SK-N-SH (cell line): ENCODE measurements at regions of chr9 and their contacts with region 1.

Region 1: GRCh38 chr9:135085830-135086546 is 1.5 kb upstream of the OLFM1 start:
- DNase-seq: peak; percentile 92
- H3K4me3 ChIP-seq: peak overlapping the region; percentile 17 to 48; a peak in 3 of 4 replicates
- H3K27ac ChIP-seq: no peak overlapping the region
- H3K4me1 ChIP-seq: peaks cover 0 to 10% of the 10 kb centered on the region in 2 experiments; a peak in 1 of 4 replicates
- H3K27me3 ChIP-seq: no peaks in the 10 kb centered on the region
- CTCF ChIP-seq: peak; percentile 91
- EP300 ChIP-seq: no peak
- RAD21 ChIP-seq: peak; percentile 98

Region 2: GRCh38 chr9:135022191-135022870 is 63.7 kb before region 1 on chr9:
- CTCF ChIA-PET with region 1: no interaction called
- POLR2A ChIA-PET with region 1: no interaction called
- DNase-seq: no peak
- H3K4me3 ChIP-seq: no peak overlapping the region
- H3K27ac ChIP-seq: no peak overlapping the region
- H3K4me1 ChIP-seq: peaks cover 0 to 14% of the 10 kb centered on the region in 2 experiments; a peak in 1 of 4 replicates
- H3K27me3 ChIP-seq: no peaks in the 10 kb centered on the region
- CTCF ChIP-seq: no peak
- EP300 ChIP-seq: no peak
- RAD21 ChIP-seq: no peak

Region 3: GRCh38 chr9:135157856-135158563 is 72.0 kb after region 1 on chr9:
- CTCF ChIA-PET with region 1: interaction called, 21 read pairs
- POLR2A ChIA-PET with region 1: no interaction called
- DNase-seq: no peak
- H3K4me3 ChIP-seq: no peak overlapping the region
- H3K27ac ChIP-seq: no peak overlapping the region
- H3K4me1 ChIP-seq: peaks cover 0 to 26% of the 10 kb centered on the region in 2 experiments; a peak in 1 of 4 replicates
- H3K27me3 ChIP-seq: no peaks in the 10 kb centered on the region
- CTCF ChIP-seq: no peak
- EP300 ChIP-seq: no peak
- RAD21 ChIP-seq: no peak

Region 4: DNA sequence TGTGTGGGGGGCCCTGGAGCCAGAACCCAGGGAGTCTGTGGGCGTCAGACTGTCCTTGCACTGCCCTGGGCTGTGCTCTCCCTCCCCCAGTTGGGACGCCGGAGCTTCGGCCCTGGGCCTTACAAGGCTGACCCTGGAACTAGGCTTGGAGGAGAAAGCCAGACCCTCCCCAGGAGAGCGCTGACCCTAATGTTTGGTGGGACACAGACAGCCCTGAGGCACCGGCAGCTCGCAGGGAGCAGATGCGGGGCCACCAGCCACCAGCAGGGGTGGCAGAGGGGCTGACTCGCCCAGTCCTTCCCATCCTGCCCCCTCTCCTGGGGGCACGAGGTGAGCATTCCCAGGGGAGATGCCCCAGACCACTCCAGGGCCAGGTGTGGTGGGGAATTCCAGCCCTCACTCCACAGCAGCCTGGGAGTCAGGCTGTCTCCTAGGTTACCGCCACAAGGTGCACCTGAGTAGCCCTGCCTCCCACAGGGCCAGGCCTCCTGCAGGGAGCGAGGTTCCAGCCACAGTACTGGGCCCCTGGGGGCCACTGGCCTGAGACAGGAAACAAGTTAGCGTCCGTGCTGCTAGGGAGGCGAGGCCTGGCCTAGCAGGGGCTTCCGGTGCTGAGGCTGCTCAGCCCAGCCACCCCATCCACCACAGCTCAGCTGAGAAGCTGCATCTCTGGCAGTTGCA is 136.1 kb after region 1 on chr9:
- CTCF ChIA-PET with region 1: interaction called, 48 read pairs
- POLR2A ChIA-PET with region 1: no interaction called
- DNase-seq: peak; percentile 68
- H3K4me3 ChIP-seq: no peak overlapping the region
- H3K27ac ChIP-seq: no peak overlapping the region
- H3K4me1 ChIP-seq: peaks cover 0 to 46% of the 10 kb centered on the region in 2 experiments; a peak in 2 of 4 replicates
- H3K27me3 ChIP-seq: no peaks in the 10 kb centered on the region
- CTCF ChIP-seq: no peak
- EP300 ChIP-seq: no peak
- RAD21 ChIP-seq: no peak

Region 5: DNA sequence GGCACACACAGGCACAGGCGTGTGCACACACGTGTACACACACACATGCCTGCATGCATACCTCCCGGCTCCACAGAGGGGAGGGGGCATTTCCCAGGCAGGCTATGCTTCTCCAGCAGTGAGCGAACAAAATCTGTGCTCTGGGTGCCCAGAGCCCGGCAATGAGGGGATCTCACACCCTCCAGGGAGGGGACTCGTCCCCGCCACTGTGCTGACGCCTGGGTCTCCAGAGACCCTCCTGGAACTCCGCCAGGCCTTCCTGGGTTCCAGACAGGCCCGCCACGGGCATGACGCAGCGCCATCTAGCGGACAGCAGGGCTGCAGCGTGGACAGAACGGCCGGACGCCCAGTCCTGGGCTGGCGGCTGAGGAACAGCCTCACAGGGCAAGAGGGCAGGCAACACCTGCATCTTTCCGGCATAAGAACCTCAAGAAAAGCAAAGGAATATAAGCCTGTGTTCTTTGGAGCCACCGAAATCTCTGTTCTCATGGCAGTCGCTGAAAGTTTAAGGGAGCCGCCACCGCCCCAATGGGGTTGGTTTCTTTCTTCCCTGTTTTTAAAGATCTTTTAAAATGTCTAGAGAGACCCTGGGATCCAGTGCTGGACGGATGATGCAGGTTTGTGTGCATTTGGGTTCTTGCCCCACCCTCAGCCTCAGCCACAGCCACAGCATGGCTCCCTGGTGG is 258.0 kb after region 1 on chr9:
- CTCF ChIA-PET with region 1: interaction called, 154 read pairs
- POLR2A ChIA-PET with region 1: no interaction called
- DNase-seq: peak; percentile 93
- H3K4me3 ChIP-seq: peak overlapping the region in 1 of 2 experiments; percentile 53; a peak in 1 of 4 replicates
- H3K27ac ChIP-seq: no peak overlapping the region
- H3K4me1 ChIP-seq: peaks cover 0 to 15% of the 10 kb centered on the region in 2 experiments; a peak in 2 of 4 replicates
- H3K27me3 ChIP-seq: no peaks in the 10 kb centered on the region
- CTCF ChIP-seq: peak; percentile 32
- EP300 ChIP-seq: no peak
- RAD21 ChIP-seq: peak; percentile 90

Region 6: DNA sequence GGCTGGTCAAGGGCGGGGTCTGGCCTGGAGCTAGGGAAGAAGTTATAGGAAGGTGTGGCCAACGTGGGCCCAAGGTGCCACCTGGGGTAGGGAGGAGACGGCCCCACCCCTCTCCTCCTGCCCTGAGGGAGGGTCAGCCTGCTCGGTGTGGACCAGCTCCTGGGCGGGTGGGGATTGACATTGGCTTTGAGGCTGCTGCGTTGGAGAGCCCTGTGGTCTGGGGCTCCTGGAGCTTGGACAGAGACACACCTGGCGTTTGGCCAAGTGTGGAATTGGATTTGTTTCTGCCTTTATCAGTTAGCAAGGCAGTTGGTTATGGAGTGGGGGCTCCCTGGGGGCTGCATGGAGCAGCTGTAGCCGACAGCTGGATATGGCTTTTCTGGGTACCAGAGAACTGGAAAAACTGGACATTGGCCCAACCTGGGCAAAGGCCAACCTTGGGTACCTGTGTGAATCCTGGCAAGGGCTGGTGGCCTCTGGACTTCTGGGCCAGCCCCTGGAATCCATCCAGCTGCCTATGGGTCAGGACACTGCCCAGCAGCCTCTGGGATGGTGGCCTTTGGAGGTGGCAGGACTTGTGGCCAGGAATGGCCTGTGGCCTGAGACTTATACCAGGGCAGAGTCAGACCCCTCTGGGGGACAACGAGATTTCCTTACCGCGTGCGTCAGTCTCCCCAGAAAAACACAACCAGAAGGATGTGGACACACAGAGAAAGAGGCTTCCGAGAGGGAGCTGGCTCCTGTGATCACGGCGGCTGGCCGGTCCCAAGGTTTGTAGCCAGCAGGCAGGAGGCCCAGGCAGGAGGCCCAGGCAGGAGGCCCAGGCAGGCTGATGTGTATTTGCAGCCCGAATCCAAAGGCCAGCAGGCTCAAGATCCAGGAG is 318.1 kb after region 1 on chr9:
- CTCF ChIA-PET with region 1: interaction called, 290 read pairs
- POLR2A ChIA-PET with region 1: no interaction called
- DNase-seq: peak; percentile 75
- H3K4me3 ChIP-seq: no peak overlapping the region
- H3K27ac ChIP-seq: no peak overlapping the region
- H3K4me1 ChIP-seq: peaks cover 0 to 13% of the 10 kb centered on the region in 2 experiments; a peak in 1 of 4 replicates
- H3K27me3 ChIP-seq: no peaks in the 10 kb centered on the region
- CTCF ChIP-seq: no peak
- EP300 ChIP-seq: no peak
- RAD21 ChIP-seq: no peak